WTC11 (cell line): ENCODE measurements at regions of chr15 and their contacts with region 1.

Region 1: GRCh38 chr15:89760303-89761008 is 9.4 kb upstream of the MESP1 start:
- DNase-seq: peak; percentile 94
- ATAC-seq: peak; percentile 98
- H3K4me3 Mint-ChIP-seq: no peak overlapping the region
- H3K27ac Mint-ChIP-seq: no peak overlapping the region
- H3K4me1 Mint-ChIP-seq: peaks cover 13% of the 10 kb centered on the region
- H3K27me3 Mint-ChIP-seq: peaks cover 8% of the 10 kb centered on the region
- CTCF ChIP-seq: peak; percentile 97

Region 2: GRCh38 chr15:89740137-89740536 is 20.3 kb before region 1 on chr15:
- CTCF ChIA-PET with region 1: interaction called, 17 read pairs
- POLR2A ChIA-PET with region 1: no interaction called
- DNase-seq: peak; percentile 69
- ATAC-seq: peak; percentile 97
- H3K4me3 Mint-ChIP-seq: no peak overlapping the region
- H3K27ac Mint-ChIP-seq: no peak overlapping the region
- H3K4me1 Mint-ChIP-seq: no peaks in the 10 kb centered on the region
- H3K27me3 Mint-ChIP-seq: peaks cover 4% of the 10 kb centered on the region
- CTCF ChIP-seq: peak; percentile 93

Region 3: DNA sequence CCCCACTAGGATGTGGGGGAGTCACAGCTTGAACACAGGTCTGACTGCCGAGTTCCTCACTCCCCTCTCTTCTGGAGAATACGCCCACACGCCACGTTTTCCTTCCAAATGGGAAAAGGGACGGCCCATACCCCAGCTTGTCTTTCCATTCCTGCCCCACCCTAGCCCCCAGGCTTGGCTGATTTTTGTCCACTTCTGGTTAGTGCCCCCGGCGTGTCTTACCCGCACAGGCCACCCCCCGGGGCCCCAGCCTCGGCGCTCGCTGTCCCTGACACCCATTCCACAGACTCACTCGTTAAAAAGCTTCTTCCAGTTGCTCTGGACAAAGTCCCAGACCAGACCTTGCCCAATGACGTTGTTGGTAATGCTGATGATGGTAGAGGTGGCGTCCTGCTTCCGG is 30.2 kb after region 1 on chr15:
- CTCF ChIA-PET with region 1: interaction called, 10 read pairs
- POLR2A ChIA-PET with region 1: no interaction called
- DNase-seq: no peak
- ATAC-seq: no peak
- H3K4me3 Mint-ChIP-seq: no peak overlapping the region
- H3K27ac Mint-ChIP-seq: no peak overlapping the region
- H3K4me1 Mint-ChIP-seq: no peaks in the 10 kb centered on the region
- H3K27me3 Mint-ChIP-seq: no peaks in the 10 kb centered on the region; the same call in 1 of the 2 replicates
- CTCF ChIP-seq: no peak

Region 4: GRCh38 chr15:89828241-89829082 is 68.0 kb after region 1 on chr15:
- CTCF ChIA-PET with region 1: interaction called, 26 read pairs
- POLR2A ChIA-PET with region 1: no interaction called
- DNase-seq: no peak
- ATAC-seq: peak; percentile 36
- H3K4me3 Mint-ChIP-seq: no peak overlapping the region
- H3K27ac Mint-ChIP-seq: no peak overlapping the region
- H3K4me1 Mint-ChIP-seq: peaks cover 14% of the 10 kb centered on the region
- H3K27me3 Mint-ChIP-seq: no peaks in the 10 kb centered on the region
- CTCF ChIP-seq: no peak

Region 5: DNA sequence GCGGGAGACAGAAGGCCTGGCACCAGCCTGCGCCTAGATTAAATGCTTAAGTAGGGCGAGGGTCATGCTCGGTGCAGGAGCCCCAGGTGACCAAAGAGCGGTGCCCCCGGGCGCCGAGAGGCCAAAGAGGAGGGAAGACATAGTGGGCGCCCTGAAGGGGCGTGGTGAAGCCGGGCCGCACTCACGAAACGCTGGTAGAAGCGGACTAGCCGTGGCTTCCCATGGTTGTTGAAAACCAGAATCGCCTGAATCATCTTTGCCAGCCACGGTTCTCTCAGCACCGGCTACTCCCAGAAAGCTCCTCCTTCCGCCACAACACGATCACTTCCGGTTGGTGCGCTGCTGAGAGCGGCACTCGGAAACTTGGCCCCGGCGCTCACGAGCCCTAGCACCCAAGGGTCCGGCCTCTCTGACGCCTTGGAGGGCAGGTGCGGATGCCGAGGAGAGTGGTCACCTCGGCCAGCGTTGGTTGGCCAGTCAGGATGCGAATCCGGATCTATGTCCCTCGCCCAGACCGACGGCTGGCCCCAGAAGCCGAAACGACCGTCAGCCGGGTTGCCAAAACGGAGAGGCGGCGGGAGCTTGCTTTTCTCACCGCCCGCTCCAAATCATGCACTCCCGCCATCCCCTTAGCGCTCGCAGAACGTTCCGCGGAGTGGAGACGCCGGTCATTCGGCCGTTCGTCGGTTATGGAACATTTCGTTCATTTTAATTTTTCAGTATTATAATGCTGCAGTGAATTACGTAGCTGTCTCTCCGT is 133.4 kb after region 1 on chr15 and contains the start of gene AP3S2:
- CTCF ChIA-PET with region 1: interaction called, 49 read pairs
- POLR2A ChIA-PET with region 1: no interaction called
- DNase-seq: peak; percentile 87
- ATAC-seq: peak; percentile 77
- H3K4me3 Mint-ChIP-seq: peak within 1 kb of the TSS; percentile 99
- H3K27ac Mint-ChIP-seq: peak within 1 kb of the TSS; percentile 99
- H3K4me1 Mint-ChIP-seq: peaks cover 19% of the 10 kb centered on the region
- H3K27me3 Mint-ChIP-seq: no peaks in the 10 kb centered on the region
- CTCF ChIP-seq: no peak
- total RNA-seq, gene AP3S2: 35.7 to 40.0 TPM (median 36.7 TPM) in 3 replicates